ENCODE measurements at regions of chr11 and their contacts with region 1.

Region 1: GRCh38 chr11:16605894-16606783 is 132.3 kb upstream of the C11orf58 start:
- DNase-seq: peak; percentile 95
- H3K4me3 Mint-ChIP-seq: peak overlapping the region; percentile 74
- H3K27ac Mint-ChIP-seq: peak overlapping the region; percentile 67
- H3K4me1 Mint-ChIP-seq: peaks cover 12% of the 10 kb centered on the region
- H3K27me3 Mint-ChIP-seq: peaks cover 49% of the 10 kb centered on the region

Region 2: DNA sequence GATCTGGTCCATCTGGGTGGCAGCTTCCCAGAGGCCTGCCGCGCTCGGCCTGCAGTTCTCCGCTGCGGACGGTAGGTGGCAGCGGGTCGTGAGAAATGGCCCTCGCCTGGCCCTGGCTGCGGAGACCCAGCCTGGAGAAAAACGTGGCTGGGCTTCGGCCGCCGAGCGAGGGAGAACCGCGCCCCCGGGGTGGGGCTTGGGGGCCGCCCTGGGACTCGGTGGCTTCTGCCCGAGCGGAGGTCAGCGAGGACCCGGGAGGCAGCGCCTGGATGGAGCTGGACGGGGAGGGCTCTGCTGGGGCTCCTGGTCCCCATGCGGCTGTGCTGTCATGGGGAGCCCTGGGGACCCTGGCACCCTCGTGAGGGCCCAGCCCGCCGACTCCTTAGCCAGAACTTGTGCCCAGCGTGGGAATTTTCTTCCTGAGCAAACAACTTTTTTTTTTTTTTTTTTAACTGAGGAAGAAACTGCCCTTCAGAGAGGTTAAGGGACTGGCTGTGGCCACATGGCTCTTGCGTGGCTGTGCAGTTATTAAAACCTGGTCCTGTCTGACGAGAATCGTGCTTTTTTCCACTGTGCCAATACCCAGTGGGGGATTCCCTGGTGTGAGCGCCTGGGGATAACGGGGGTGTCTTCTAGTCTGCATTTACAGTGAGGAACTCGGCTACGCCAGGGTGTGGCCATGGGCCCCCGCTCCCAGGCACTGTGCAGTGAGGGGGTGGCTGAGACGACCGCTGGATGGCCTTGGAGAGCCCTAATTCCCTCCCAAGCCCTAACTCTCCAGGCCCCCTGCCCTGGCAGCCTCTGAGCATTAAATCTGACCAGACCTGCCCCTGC is 955.8 kb before region 1 on chr11:
- intact Hi-C with region 1: loop called (anchors 1 kb)
- DNase-seq: peak; percentile 93
- H3K4me3 Mint-ChIP-seq: no peak overlapping the region
- H3K27ac Mint-ChIP-seq: no peak overlapping the region
- H3K4me1 Mint-ChIP-seq: no peaks in the 10 kb centered on the region
- H3K27me3 Mint-ChIP-seq: peaks cover 23% of the 10 kb centered on the region

Measured in activated CD4-positive, alpha-beta T cell treated with anti-CD3 and anti-CD28 coated beads, Interleukin-2, amount 10 ng/mL, durations not matched to agents 24 days and 14 days (primary cell).